Left cardiac atrium (tissue), 4 donors: ENCODE measurements at regions of chr19 and their contacts with region 1.

Region 1: DNA sequence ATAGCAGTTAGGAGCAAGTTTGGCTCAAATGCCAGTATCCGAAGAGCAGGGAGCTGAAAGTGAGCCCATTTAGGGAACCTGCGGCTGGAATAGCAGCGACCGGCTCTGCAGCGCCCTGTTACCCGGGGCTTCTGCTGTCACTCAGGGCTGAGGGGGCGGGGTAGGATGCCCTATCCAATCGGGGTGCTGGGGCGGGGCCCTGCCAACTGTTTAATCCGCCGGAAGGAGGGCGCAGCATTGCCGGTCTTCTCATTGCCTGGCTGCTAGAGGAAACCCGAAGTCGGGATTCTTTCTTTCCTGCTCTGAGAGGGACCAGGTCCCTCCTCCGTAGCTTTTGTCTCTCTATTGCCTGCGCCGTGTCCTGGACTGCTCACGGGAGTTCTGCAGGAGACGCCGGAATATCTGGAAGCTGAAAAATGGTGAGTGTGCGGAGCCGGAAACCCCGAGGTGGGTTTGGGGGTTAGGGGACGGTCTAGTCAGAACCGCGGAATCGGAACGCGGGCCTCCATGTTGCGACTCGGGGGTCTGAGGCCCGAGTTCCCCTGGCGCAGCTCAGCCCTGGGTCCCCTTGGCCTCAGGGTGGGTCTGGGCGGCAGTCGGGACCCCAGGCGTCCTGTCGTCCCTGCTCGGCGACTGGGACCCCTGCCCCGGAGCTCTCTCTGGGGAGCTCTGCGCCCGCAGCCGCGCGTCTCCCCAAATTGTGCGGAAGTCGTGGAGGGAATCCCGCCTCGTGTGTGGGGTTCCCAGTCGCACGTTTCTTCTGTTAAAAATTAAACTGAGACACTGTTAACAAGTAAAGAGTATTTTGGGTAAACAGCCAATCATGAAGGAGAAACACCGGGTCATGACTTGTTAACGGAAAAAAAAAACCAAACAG is 22.8 kb downstream of the ZNF763 start:
- DNase-seq: peak; percentile 99
- ATAC-seq: peak; percentile 100

Region 2: GRCh38 chr19:11798391-11799330 is 189.0 kb before region 1 on chr19 and contains the start of gene ZNF491:
- intact Hi-C with region 1: loop called in 1 of 2 experiments (anchors 2 kb)
- DNase-seq: peak; percentile 96
- ATAC-seq: peak; percentile 99 to 100
- total RNA-seq, gene ZNF491: 1.6 to 2.2 TPM

Region 3: GRCh38 chr19:11881151-11881800 is 106.4 kb before region 1 on chr19:
- intact Hi-C with region 1: loop called (anchors 2 to 10 kb)
- DNase-seq: peak; percentile 45
- ATAC-seq: peak; percentile 79 to 85

Region 4: GRCh38 chr19:11887611-11888531 is 99.8 kb before region 1 on chr19 and contains the start of gene ZNF69:
- intact Hi-C with region 1: loop called (anchors 2 to 10 kb)
- DNase-seq: peak; percentile 93
- ATAC-seq: peak; percentile 97 to 100
- total RNA-seq, gene ZNF69: 4.4 to 4.5 TPM

Region 5: GRCh38 chr19:11902228-11902627 is 85.4 kb before region 1 on chr19:
- intact Hi-C with region 1: no loop called
- DNase-seq: no peak
- ATAC-seq: no peak

Region 6: GRCh38 chr19:11921852-11922495 is 65.7 kb before region 1 on chr19:
- intact Hi-C with region 1: loop called in 1 of 2 experiments (anchors 2 kb)
- DNase-seq: no peak
- ATAC-seq: no peak

Region 7: DNA sequence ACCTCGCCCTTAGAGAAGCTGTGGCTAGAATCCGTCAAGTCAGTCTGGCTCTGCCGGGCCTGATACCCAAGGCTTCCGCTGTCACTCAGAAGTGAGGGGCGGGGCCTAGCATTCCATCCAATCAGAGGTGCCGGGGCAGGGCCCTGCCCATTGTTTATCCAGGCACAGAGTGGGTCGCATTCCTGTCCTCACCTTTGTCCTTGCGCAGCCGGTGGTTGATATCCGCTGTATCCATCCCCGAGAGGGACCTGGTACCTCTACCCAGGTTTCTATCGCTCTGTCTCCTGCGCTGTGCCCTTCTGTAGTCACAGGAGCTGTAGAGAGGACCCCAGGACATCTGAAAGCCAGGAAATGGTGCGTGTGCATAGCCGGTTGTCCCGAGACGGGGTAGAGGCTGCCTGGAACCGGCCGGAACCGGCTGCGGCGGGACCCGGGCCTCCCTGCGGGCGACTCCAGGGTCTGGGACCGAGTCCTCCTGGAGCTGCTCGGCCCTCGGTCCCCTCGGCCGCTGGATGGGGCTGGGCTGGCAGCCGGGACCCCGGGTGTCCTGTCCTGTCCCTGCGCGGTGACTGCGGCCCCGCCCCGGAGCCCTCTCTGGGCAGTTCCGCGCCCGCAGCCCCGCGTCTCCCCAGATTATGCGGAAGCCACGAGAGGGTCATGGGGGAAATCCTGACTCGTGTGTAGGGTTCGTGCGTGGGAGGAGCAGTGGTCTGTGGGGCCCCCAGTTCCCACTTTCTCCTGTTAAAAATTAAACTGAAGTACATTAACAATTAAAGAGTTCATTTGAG is 22.6 kb before region 1 on chr19 and contains the start of gene ZNF763:
- intact Hi-C with region 1: loop called in 1 of 2 experiments (anchors 1 kb)
- DNase-seq: peak; percentile 95
- ATAC-seq: peak; percentile 97 to 99
- total RNA-seq, gene ZNF763: 1.5 to 3.4 TPM